Posterior vena cava (tissue), 2 donors: ENCODE measurements at regions of chr9 and their contacts with region 1.

Region 1: DNA sequence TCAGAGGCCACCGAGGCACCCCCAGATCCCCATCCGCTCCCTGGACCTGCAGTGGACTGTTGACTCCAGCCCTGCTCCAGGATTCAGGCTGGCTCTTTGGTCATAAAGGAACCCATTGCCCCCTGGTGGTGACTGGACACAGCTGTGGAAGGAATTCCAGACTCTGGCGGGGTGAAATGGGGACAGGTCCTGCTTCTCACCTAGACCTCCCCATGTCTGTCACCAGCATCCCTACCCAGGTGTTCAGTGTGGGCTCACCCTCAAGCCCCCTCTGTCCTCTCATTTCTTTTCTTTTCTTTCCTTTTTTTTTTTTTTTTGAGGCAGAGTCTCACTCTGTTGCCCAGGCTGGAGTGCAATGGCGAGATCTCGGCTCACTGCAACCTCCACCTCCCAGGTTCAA is 25.5 kb upstream of the STXBP1 start:
- DNase-seq: peak; percentile 91

Region 2: GRCh38 chr9:127293328-127293727 is 293.2 kb before region 1 on chr9:
- intact Hi-C with region 1: loop called in 1 of 2 experiments (anchors 5 kb)
- DNase-seq: no peak

Region 3: DNA sequence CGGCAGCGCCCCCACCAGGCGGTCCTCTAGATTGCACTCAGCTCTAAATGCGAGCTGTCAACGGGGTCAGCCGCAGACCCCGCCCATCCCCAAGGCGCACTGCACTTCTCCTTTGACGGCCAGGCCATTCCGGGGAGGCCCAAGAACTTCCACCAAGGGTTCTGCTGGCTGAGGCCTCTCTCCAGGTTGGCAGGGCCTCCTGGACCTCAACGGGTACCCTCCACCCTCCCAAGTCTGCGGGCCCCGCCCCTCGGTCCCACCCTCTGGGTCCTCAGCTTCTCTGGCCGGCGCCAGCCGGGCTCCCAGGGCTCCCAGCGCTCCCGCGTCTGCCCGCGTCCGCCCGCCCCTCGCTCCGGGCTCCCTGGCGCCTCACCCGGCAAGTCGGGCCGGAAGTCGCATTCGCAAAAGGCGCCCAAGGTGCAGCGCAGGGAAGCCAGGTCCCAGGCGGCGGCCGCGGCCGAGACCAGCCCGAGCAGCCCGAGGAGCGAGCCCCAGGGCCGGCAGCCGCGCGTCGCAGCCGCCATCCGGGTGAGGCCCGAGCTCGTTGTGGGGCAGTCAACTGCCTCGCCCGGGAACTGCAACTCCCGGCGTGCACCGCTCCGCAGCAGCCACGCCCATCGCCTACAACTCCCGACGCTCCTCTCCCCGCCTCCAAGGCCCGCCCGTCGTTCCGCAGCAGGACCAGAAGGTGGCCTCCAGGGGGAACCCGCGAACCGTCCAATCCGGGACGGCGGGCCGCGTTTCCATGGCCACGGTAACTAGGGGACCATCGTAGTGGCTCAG is 148.4 kb after region 1 on chr9 and contains the start of gene TOR2A:
- intact Hi-C with region 1: loop called in 1 of 2 experiments (anchors 5 kb)
- DNase-seq: peak; percentile 100
- total RNA-seq, gene TOR2A: 4.9 to 8.2 TPM

Region 4: GRCh38 chr9:127785023-127785932 is 198.7 kb after region 1 on chr9:
- intact Hi-C with region 1: loop called in 1 of 2 experiments (anchors 5 kb)
- DNase-seq: peak; percentile 96